ENCODE measurements at regions of chr1 and their contacts with region 1.

Region 1: DNA sequence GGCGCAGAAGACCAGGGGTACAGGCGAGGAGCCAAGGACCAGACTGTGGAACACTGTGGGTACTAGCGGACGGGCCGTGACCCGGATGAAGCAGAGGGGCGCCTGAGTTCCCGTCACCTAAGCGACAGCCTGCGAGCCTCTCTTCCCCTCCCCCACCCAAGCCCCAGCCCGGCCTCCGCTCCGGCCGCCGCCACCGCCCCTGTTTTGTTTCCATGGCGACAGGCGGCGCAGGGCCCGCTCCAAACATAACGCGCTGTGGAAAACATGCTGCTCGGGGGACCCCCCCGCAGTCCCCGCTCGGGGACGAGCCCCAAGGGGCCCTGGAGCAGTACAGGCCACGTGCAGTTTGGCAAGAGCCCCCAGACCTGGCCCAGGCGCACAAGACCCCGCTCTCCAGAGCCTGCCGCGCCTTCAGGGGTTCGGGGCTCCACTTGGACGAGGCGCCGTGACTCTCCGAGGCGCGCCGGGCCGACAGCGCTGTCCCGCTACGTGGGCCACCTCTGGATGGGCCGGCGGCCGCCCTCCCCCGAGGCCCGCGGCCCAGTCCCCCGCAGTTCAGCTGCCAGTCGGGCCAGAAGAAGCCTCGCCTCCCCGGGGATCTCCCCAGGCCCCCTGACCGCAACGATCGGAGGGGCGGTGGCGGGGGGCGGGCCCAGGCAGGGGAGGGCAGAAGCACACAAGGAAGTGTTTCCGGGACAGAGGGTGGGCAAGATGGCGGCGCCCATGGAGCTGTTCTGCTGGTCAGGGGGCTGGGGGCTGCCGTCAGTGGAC is at the start of gene MTX1:
- DNase-seq: peak; percentile 83 to 91 (median 88)
- ATAC-seq: peak; percentile 89
- H3K4me3 ChIP-seq: peak within 1 kb of the TSS; percentile 100
- H3K4me3 Mint-ChIP-seq: peak within 1 kb of the TSS; percentile 81 to 92 (median 88)
- H3K27ac ChIP-seq: peak within 1 kb of the TSS; percentile 100
- H3K27ac Mint-ChIP-seq: peak within 1 kb of the TSS; percentile 92 to 99 (median 96)
- H3K4me1 ChIP-seq: peaks cover 20 to 21% of the 10 kb centered on the region in 2 donors
- H3K4me1 Mint-ChIP-seq: peaks cover 19 to 30% (median 24%) of the 10 kb centered on the region in 7 donors
- H3K27me3 ChIP-seq: no peaks in the 10 kb centered on the region
- H3K27me3 Mint-ChIP-seq: no peaks in the 10 kb centered on the region
- total RNA-seq, gene MTX1: 19.5 to 40.8 (median 22.0) TPM

Region 2: DNA sequence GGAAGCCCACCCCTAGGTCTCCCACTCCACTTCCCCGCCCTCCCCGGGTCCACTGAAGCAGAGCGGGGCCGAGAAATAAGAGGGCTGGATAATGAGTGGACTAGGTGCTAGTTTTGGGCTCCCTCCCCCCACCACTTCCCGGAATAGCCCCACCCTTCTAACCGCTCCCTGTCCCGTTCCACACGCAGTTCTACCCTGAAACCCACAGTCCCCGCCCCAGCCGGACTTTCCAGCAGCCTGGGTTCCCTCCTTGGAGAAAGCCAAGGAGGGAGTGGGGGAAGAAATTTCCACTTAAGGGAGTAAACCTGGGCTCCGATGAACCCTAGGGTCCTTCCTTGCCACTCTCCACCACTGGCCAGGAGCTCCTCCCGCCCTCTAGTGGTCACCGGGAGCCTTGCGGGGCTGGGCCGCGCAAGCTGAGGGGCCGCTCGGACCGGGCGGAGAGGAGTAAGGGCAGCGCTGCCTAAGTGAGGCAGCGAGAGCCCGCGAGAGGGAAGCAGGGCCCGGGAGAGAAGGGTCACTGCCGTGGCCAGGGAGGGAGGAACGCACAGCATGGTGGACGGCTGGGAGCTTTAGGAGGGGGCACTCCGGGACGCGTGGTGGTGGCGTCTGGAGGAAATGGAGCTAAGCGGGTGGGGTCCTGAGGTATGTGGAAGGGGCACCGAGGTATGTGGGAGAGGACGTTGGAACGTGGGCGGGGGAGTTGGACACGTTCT is 15.3 kb before region 1 on chr1:
- CTCF ChIA-PET with region 1: interaction called, 9 read pairs
- POLR2A ChIA-PET with region 1: interaction called, 10 read pairs
- intact Hi-C with region 1: loop called (anchors 1 to 2 kb)
- DNase-seq: peak in 8 of 9 donors; percentile 38 to 89 (median 54)
- ATAC-seq: peak; percentile 54
- H3K4me3 ChIP-seq: peak overlapping the region; percentile 57
- H3K4me3 Mint-ChIP-seq: peak overlapping the region; percentile 88 to 97 (median 92)
- H3K27ac ChIP-seq: peak overlapping the region; percentile 76
- H3K27ac Mint-ChIP-seq: peak overlapping the region; percentile 92 to 99 (median 97)
- H3K4me1 ChIP-seq: peaks cover 11 to 25% of the 10 kb centered on the region in 2 donors
- H3K4me1 Mint-ChIP-seq: peaks cover 8 to 35% (median 29%) of the 10 kb centered on the region in 7 donors
- H3K27me3 ChIP-seq: no peaks in the 10 kb centered on the region
- H3K27me3 Mint-ChIP-seq: no peaks in the 10 kb centered on the region

Region 3: DNA sequence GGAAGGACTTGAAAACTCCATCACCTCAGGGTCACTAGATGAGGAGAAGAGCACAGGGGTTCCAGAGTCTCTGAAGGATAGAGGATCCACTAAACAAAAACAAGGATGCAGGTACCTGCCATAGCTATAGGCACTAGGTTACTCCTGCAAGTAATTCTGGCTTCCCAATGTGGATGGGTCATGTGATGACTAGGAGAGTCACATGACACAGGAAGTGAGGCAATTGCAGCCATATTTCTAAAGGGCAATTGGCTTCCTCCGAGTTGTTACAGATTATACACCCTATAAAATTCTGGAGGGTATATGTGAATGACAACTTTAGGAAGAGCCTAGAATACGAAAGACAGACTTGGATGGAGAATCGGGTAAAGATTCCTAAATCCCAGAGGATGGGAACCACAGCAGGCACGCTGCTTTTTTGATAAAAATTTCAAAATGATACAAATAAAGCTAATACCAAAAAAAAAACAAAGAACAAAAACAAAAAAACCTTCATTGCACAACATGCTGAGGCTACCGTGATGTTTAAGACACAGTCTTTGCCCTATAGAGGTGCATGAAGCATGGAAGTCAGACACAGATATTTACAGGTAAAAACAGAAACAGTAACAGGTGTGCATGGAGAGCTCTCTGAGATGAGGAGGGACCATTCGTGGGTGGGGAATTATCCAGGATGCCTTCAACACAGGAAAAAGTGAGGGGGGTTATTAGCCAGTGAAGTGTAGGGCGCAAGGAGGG is 10.3 kb after region 1 on chr1:
- CTCF ChIA-PET with region 1: interaction called, 86 read pairs
- POLR2A ChIA-PET with region 1: interaction called, 63 read pairs
- intact Hi-C with region 1: loop called in 1 of 2 experiments (anchors 1 kb)
- DNase-seq: peak in 1 of 9 donors; percentile 20
- ATAC-seq: no peak
- H3K4me3 ChIP-seq: no peak overlapping the region
- H3K4me3 Mint-ChIP-seq: peak overlapping the region in 2 of 10 donors; percentile 21 to 51
- H3K27ac ChIP-seq: no peak overlapping the region
- H3K27ac Mint-ChIP-seq: peak overlapping the region in 6 of 9 donors; percentile 5 to 78 (median 42)
- H3K4me1 ChIP-seq: no peaks in the 10 kb centered on the region
- H3K4me1 Mint-ChIP-seq: peaks cover 7 to 32% (median 14%) of the 10 kb centered on the region in 7 donors
- H3K27me3 ChIP-seq: no peaks in the 10 kb centered on the region
- H3K27me3 Mint-ChIP-seq: no peaks in the 10 kb centered on the region

Region 4: DNA sequence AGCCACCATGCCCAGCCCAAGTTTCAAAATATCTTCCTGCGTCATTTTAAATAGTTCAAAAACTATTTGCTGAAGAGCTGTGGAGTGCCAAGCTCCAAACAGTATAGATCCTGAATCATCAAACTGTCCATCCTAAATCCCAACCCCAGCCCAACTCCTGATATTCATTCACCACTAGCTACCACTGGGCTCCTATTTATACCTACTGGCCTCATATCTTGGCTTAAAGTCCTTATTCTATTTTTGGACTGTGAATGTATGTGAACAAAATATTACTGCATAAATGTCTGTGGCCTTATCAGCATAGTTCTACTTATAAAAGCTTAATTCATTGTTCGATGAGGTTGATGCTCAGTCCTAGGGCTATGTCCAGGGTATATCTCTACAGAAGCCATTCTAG is 58.6 kb after region 1 on chr1:
- CTCF ChIA-PET with region 1: no interaction called
- POLR2A ChIA-PET with region 1: no interaction called
- intact Hi-C with region 1: no loop called
- DNase-seq: no peak
- ATAC-seq: no peak
- H3K4me3 ChIP-seq: no peak overlapping the region
- H3K4me3 Mint-ChIP-seq: no peak overlapping the region
- H3K27ac ChIP-seq: no peak overlapping the region
- H3K27ac Mint-ChIP-seq: no peak overlapping the region
- H3K4me1 ChIP-seq: peaks cover 6 to 15% of the 10 kb centered on the region in 2 donors
- H3K4me1 Mint-ChIP-seq: peaks cover 7 to 42% (median 24%) of the 10 kb centered on the region in 7 donors
- H3K27me3 ChIP-seq: no peaks in the 10 kb centered on the region
- H3K27me3 Mint-ChIP-seq: no peaks in the 10 kb centered on the region

Region 5: DNA sequence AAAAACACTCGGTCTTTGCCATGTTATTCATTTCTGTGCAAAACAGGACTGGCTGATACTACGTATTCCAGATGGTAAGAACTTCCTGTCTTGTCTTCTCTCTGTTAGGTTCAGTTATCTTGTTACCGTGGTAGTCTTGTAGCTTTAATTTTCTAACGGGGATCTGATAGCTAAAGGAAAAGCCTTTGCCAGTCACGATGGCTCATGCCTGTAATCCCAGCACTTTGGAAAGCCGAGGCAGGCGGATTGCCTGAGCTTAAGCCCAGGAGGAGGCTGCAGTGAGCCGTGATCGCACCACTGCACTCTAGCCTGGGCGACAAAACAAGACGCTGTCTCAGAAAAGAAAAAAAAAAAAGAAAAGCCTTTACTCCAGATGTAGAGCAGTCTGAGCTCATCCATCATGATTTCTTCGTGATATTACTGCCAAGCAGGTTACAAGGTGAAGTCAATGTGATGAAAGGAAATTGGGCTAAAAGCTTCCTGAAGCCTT is 390.2 kb after region 1 on chr1:
- CTCF ChIA-PET with region 1: no interaction called
- POLR2A ChIA-PET with region 1: interaction called, 4 read pairs
- intact Hi-C with region 1: loop called in 1 of 2 experiments (anchors 2 kb)
- DNase-seq: peak in 6 of 9 donors; percentile 28 to 54 (median 38)
- ATAC-seq: peak; percentile 75
- H3K4me3 ChIP-seq: peak overlapping the region; percentile 31
- H3K4me3 Mint-ChIP-seq: peak overlapping the region; percentile 60 to 92 (median 86)
- H3K27ac ChIP-seq: peak overlapping the region; percentile 58
- H3K27ac Mint-ChIP-seq: peak overlapping the region; percentile 84 to 98 (median 94)
- H3K4me1 ChIP-seq: no peaks in the 10 kb centered on the region
- H3K4me1 Mint-ChIP-seq: peaks cover 0 to 15% (median 11%) of the 10 kb centered on the region in 7 donors
- H3K27me3 ChIP-seq: no peaks in the 10 kb centered on the region
- H3K27me3 Mint-ChIP-seq: no peaks in the 10 kb centered on the region